PC-3 (cell line): ENCODE measurements at regions of chr10 and their contacts with region 1.

Region 1: DNA sequence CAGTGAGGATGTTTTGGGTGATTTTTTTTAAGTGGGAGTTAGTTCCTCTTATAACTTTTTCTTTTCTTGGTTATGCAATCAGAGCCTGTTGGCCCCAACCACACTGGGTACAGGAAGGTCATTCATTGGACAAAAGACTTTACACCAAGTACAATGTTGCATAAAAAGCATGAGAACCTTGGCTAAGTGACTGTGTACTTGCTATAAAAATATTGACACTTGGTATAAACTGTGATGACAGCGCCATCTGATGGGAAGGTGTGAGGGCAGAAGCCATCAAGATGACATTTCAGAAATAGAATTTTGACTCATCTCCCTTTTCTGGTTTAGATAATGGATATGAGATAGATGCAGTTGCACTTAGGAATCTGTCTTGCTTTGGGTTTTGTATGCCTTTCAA is 126.4 kb upstream of the CCDC6 start:
- DNase-seq: peak; percentile 96
- ATAC-seq: peak; percentile 89
- H3K4me3 ChIP-seq: no peak overlapping the region
- H3K27ac ChIP-seq: no peak overlapping the region
- H3K4me1 ChIP-seq: peaks cover 5% of the 10 kb centered on the region; the same call in 1 of the 2 replicates
- H3K27me3 ChIP-seq: no peaks in the 10 kb centered on the region
- CTCF ChIP-seq: peak; percentile 100

Region 2: GRCh38 chr10:59817773-59818172 is 214.9 kb before region 1 on chr10:
- CTCF ChIA-PET with region 1: no interaction called
- POLR2A ChIA-PET with region 1: no interaction called
- intact Hi-C with region 1: loop called (anchors 5 kb)
- DNase-seq: no peak
- ATAC-seq: no peak
- H3K4me3 ChIP-seq: no peak overlapping the region
- H3K27ac ChIP-seq: no peak overlapping the region
- H3K4me1 ChIP-seq: no peaks in the 10 kb centered on the region
- H3K27me3 ChIP-seq: no peaks in the 10 kb centered on the region
- CTCF ChIP-seq: no peak

Region 3: GRCh38 chr10:59830601-59831259 is 202.0 kb before region 1 on chr10:
- CTCF ChIA-PET with region 1: interaction called, 12 read pairs
- POLR2A ChIA-PET with region 1: no interaction called
- intact Hi-C with region 1: loop called (anchors 1 kb)
- DNase-seq: peak; percentile 88
- ATAC-seq: peak; percentile 92
- H3K4me3 ChIP-seq: no peak overlapping the region
- H3K27ac ChIP-seq: no peak overlapping the region
- H3K4me1 ChIP-seq: no peaks in the 10 kb centered on the region
- H3K27me3 ChIP-seq: no peaks in the 10 kb centered on the region
- CTCF ChIP-seq: peak; percentile 98

Region 4: GRCh38 chr10:59851864-59852263 is 180.9 kb before region 1 on chr10:
- CTCF ChIA-PET with region 1: interaction called, 18 read pairs
- POLR2A ChIA-PET with region 1: no interaction called
- intact Hi-C with region 1: no loop called
- DNase-seq: peak; percentile 47
- ATAC-seq: peak; percentile 92
- H3K4me3 ChIP-seq: no peak overlapping the region
- H3K27ac ChIP-seq: no peak overlapping the region
- H3K4me1 ChIP-seq: peaks cover 33% of the 10 kb centered on the region
- H3K27me3 ChIP-seq: no peaks in the 10 kb centered on the region
- CTCF ChIP-seq: no peak

Region 5: GRCh38 chr10:59865101-59865500 is 167.6 kb before region 1 on chr10:
- CTCF ChIA-PET with region 1: interaction called, 6 read pairs
- POLR2A ChIA-PET with region 1: interaction called, 4 read pairs
- intact Hi-C with region 1: loop called (anchors 1 kb)
- DNase-seq: peak; percentile 90
- ATAC-seq: peak; percentile 81
- H3K4me3 ChIP-seq: no peak overlapping the region
- H3K27ac ChIP-seq: no peak overlapping the region
- H3K4me1 ChIP-seq: peaks cover 19% of the 10 kb centered on the region
- H3K27me3 ChIP-seq: no peaks in the 10 kb centered on the region
- CTCF ChIP-seq: peak; percentile 93

Region 6: DNA sequence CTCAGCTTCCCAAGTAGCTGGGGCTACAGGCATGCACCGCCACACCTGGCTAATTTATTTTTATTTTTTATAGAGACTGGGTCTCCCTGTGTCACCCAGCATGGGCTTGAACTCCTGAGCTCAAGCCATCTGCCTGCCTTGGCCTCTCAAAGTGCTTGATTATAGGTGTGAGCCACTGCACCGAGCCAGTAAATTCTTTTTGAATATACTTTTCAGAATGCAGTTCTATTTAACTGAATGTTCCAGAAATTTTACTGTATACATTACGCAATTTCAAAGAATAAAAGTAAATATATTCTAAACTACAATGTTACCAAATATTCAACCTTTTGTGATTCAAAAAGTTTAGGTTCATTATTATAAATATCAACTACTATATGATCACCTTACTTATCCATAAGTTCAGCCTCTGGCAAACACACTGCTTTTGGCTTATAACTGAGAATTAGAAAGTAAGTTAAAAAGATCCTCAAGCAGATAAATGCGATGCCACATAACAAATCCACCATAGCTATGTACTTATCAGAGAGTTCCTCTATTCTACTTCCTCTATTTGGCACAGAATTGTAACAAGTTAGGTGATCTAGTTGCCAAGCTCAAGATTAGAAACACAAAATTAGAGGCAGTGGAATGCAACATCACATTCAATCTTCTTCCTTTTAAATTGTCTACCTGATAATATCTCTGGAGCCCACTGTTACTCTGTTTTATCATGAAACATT is 238.8 kb after region 1 on chr10:
- CTCF ChIA-PET with region 1: no interaction called
- POLR2A ChIA-PET with region 1: no interaction called
- intact Hi-C with region 1: no loop called
- DNase-seq: no peak
- ATAC-seq: no peak
- H3K4me3 ChIP-seq: no peak overlapping the region
- H3K27ac ChIP-seq: no peak overlapping the region
- H3K4me1 ChIP-seq: peaks cover 12% of the 10 kb centered on the region
- H3K27me3 ChIP-seq: no peaks in the 10 kb centered on the region
- CTCF ChIP-seq: no peak